ENCODE measurements at regions of chr1 and their contacts with region 1.

Region 1: DNA sequence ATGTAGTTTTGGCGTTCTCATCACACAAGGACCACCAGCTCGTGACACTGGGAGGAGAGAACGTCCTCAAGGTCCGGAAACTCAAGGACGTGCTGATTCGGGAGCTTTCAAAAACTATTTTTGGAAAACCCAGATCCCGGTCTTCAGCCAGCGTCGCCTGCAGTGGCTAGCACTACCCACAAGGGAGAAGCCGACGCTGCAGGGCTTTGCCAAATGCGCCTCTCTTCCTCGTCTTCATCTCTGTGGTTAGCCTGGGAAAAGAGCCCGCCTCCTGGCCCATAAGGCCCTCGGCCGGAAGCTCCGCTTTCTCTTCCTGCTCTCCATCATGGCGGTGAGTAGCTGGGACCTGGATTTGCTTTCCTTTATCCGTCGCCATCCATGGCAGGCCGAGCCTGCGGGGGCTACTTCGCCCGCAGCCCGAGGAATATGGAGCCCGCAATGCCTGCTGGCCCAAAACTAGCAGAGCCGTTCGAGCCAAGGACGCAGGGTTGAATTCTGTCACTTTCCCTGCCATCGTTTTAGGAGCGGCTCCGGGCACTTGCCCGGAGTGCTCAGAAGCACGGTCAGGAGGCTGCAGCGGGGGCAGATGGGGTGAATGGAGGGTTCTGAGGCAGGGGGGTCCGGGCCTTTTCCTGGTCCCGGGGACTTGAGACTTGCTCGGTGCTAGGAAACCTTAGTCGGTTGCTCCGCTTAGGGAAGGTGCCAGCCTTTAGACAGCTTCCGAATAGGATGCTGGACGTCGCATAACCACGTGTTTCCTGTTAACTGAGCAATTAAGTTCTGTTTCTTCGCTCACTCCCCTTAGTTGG is at the start of gene RPL11:
- DNase-seq: peak; percentile 97
- ATAC-seq: peak; percentile 98
- H3K4me3 ChIP-seq: peak within 1 kb of the TSS; percentile 74
- H3K27ac ChIP-seq: peak within 1 kb of the TSS; percentile 72
- H3K4me1 ChIP-seq: peaks cover 10% of the 10 kb centered on the region
- H3K27me3 ChIP-seq: no peaks in the 10 kb centered on the region
- CTCF ChIP-seq: peak; percentile 84
- POLR2A ChIP-seq: peak; percentile 99
- RAD21 ChIP-seq: peak; percentile 26; the same call in 1 of the 2 replicates
- total RNA-seq, gene RPL11: 452 and 980 TPM in 2 replicates

Region 2: GRCh38 chr1:22952694-22953391 is 738.9 kb before region 1 on chr1:
- CTCF ChIA-PET with region 1: no interaction called
- POLR2A ChIA-PET with region 1: interaction called, 16 read pairs
- dilution Hi-C with region 1: no loop called
- in situ Hi-C with region 1: no loop called
- intact Hi-C with region 1: no loop called
- DNase-seq: no peak
- ATAC-seq: no peak
- H3K4me3 ChIP-seq: no peak overlapping the region
- H3K27ac ChIP-seq: no peak overlapping the region
- H3K4me1 ChIP-seq: no peaks in the 10 kb centered on the region
- H3K27me3 ChIP-seq: peaks cover 55% of the 10 kb centered on the region
- CTCF ChIP-seq: no peak
- POLR2A ChIP-seq: no peak
- RAD21 ChIP-seq: no peak

Region 3: DNA sequence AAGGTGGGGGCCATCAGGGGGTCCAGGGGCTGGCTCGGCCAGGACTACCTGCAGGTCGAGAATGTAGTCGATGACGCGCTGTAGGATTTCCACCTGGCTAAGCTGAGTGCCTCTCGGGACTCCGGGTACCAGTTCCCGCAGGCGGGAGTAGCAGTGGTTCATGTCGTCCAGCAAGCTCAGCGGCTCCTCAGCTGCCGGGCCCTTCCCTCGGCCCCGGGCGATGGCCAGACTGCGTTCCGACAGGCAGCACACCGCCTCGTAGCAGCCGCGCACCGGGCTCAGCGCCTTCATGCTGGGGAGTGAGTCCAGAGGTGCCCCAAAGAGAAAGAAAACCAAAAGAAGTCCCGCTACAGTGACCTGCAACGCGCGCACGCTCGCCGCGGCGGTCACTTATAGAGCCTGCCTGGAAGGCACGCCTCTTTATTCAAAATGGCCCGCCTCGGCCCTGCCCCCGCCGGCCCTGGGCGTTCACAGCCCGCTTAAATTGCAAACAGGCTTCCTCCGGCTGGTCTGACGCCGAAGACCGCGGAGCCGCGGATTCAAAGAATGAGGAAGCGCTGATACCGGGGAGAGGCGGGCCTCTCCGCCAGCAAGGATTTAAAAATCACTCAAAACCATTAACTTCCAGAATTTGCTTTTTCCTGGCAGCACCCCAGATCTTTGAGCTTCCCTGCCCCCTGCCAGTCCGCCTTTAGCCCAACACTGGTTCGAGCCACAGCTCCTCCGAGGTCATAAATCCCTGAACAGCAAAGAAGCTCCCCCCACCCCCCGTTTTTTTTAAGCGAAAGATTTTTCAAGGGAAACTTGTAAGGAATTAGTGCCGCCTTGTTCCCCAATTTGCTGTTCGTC is 132.3 kb before region 1 on chr1 and contains the start of gene ID3:
- CTCF ChIA-PET with region 1: no interaction called
- POLR2A ChIA-PET with region 1: no interaction called
- dilution Hi-C with region 1: no loop called
- in situ Hi-C with region 1: no loop called
- intact Hi-C with region 1: loop called (anchors 5 kb)
- DNase-seq: peak; percentile 96
- ATAC-seq: peak; percentile 69
- H3K4me3 ChIP-seq: peak within 1 kb of the TSS; percentile 76
- H3K27ac ChIP-seq: peak within 1 kb of the TSS; percentile 91
- H3K4me1 ChIP-seq: peaks cover 37% of the 10 kb centered on the region
- H3K27me3 ChIP-seq: no peaks in the 10 kb centered on the region
- CTCF ChIP-seq: no peak
- POLR2A ChIP-seq: peak; percentile 99
- RAD21 ChIP-seq: no peak; the same call in none of the 2 replicates
- total RNA-seq, gene ID3: 109 and 171 TPM in 2 replicates

Region 4: GRCh38 chr1:23743287-23744052 is 51.8 kb after region 1 on chr1 and contains the start of gene ELOA:
- CTCF ChIA-PET with region 1: interaction called, 4 read pairs
- POLR2A ChIA-PET with region 1: no interaction called
- dilution Hi-C with region 1: no loop called
- in situ Hi-C with region 1: no loop called
- intact Hi-C with region 1: loop called (anchors 5 kb)
- DNase-seq: peak; percentile 53
- ATAC-seq: peak; percentile 93
- H3K4me3 ChIP-seq: peak within 1 kb of the TSS; percentile 88
- H3K27ac ChIP-seq: peak within 1 kb of the TSS; percentile 86
- H3K4me1 ChIP-seq: peaks cover 2% of the 10 kb centered on the region
- H3K27me3 ChIP-seq: no peaks in the 10 kb centered on the region
- CTCF ChIP-seq: no peak
- POLR2A ChIP-seq: peak; percentile 59
- RAD21 ChIP-seq: no peak
- total RNA-seq, gene ELOA: 40.7 and 44.4 TPM in 2 replicates

Region 5: DNA sequence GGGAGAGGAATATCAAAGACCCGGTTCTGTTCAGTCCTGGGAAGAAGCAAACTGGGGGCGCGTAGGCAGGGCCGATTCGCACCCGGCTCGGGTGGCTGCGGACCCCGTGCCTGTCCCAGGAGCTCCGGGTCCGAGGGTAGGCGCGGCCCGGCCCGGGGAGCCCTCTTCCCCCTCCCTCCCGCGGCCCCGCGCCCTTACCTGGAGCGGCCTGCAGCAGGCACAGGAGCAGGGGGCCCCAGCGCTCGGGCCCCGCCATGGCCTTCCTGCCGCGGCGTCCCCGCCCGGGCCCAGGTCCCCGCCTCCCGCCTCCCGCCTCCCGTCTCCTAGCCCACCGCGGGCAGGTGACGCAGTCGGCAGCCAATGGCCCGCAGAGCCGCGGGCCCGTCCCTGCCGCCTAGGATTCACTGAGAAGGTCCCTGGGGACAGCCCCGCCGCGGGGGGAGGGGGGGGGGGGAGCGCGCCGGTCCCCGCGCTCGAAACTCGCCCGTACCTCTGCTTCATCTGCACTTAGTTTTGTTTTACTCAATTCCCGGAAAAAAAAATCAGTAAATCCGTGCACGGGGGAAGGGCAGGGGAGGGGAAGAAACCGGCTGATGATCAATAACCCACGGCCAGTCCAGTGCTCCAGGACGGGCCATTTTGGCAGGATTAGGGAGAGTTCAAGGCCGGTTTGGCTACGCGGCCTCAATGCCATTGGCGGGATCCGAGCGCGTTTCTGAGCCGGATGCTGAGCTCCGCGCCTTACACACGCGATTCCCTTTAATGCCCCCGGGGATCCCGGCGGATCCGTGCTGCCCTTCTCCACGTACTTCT is 495.5 kb after region 1 on chr1 and contains the start of gene IFNLR1:
- CTCF ChIA-PET with region 1: no interaction called
- POLR2A ChIA-PET with region 1: no interaction called
- dilution Hi-C with region 1: no loop called
- in situ Hi-C with region 1: no loop called
- intact Hi-C with region 1: no loop called
- DNase-seq: no peak
- ATAC-seq: peak; percentile 55
- H3K4me3 ChIP-seq: peak within 1 kb of the TSS; percentile 31
- H3K27ac ChIP-seq: no peak within 1 kb of the TSS
- H3K4me1 ChIP-seq: peaks cover 2% of the 10 kb centered on the region
- H3K27me3 ChIP-seq: peaks cover 36% of the 10 kb centered on the region
- CTCF ChIP-seq: no peak
- POLR2A ChIP-seq: no peak
- RAD21 ChIP-seq: no peak
- total RNA-seq, gene IFNLR1: not detected in 2 replicates

Measured in IMR-90 (cell line).